HCT116 (cell line): ENCODE measurements at regions of chr10 and their contacts with region 1.

Region 1: GRCh38 chr10:100878291-100878910 is 34.4 kb upstream of the SLF2 start:
- DNase-seq: peak; percentile 82
- ATAC-seq: peak; percentile 96
- H3K4me3 ChIP-seq: no peak overlapping the region
- H3K27ac ChIP-seq: no peak overlapping the region
- H3K4me1 ChIP-seq: peaks cover 8 to 27% of the 10 kb centered on the region in 2 experiments
- H3K27me3 ChIP-seq: no peaks in the 10 kb centered on the region
- CTCF ChIP-seq: peak; percentile 90 to 98 (median 92)
- POLR2A ChIP-seq: no peak
- RAD21 ChIP-seq: peak; percentile 99

Region 2: DNA sequence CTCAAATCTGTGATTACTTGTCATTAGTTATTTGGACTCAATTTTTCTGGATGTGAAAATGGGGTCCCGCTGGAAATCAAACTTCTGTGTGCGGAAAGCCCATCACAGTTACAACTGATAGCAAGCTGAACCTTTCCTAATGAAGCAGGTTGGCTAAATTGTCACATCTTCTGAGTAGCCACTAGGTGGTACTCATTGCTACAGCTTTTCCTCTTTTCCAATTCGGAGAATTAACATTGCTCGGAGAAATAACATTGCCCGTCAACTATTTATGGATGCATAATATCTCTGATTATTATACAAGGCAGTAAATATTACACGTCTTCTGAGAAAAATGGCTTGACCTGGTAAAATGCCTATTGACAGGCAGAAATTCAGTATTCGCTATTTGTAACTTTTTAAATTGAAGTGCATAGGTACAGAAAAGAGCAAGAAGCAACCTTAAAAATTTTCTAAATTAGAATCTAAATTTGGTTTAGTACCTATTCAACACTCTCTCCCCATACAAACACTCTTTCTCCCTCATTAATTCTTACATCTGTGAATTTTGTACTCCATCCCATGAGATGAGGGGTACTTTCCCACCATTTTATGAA is 574.6 kb before region 1 on chr10:
- CTCF ChIA-PET with region 1: interaction called, 9 read pairs
- POLR2A ChIA-PET with region 1: no interaction called
- RAD21 ChIA-PET with region 1: no interaction called
- intact Hi-C with region 1: loop called (anchors 1 kb)
- DNase-seq: peak; percentile 32
- ATAC-seq: peak; percentile 87
- H3K4me3 ChIP-seq: no peak overlapping the region
- H3K27ac ChIP-seq: no peak overlapping the region
- H3K4me1 ChIP-seq: peaks cover 4 to 7% of the 10 kb centered on the region in 2 experiments; a peak in 2 of 4 replicates
- H3K27me3 ChIP-seq: no peaks in the 10 kb centered on the region; the same call in 1 of the 2 replicates
- CTCF ChIP-seq: peak; percentile 84 to 91 (median 87); a peak in 5 of 6 replicates
- POLR2A ChIP-seq: no peak
- RAD21 ChIP-seq: peak; percentile 89

Region 3: DNA sequence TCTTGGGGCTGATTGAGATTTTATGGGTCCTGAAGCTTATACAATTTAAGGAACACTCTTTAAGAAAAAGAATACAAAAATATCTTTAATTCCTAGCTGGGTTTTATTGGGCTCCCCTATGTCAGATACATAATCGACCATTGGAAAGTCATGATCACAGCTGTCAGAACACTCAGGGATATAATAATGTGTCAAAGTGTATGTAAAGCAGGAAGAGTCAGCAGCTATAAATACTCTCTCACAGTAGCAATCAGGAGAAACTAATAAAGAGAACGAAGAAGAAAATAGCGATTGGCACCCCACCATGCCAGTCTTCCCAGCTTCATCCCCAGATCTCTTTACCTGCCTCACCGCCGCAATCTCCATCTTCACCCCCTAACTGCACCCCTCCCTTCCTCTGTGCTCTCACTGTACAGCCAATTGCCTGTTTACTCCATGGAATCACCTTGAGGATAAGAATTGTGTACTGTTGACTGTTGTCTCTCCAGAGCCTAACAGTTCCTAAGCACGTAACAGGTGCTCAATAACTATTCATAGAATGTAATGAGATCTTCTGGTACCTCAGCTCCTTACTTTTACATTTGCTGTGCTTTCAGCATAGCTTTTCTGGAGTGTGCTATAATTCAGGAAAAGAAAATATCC is 439.6 kb before region 1 on chr10:
- CTCF ChIA-PET with region 1: interaction called, 27 read pairs
- POLR2A ChIA-PET with region 1: no interaction called
- RAD21 ChIA-PET with region 1: interaction called in 1 of 2 experiments, 4 read pairs
- intact Hi-C with region 1: loop called (anchors 1 kb)
- DNase-seq: no peak
- ATAC-seq: no peak
- H3K4me3 ChIP-seq: no peak overlapping the region
- H3K27ac ChIP-seq: no peak overlapping the region
- H3K4me1 ChIP-seq: peaks cover 0 to 4% of the 10 kb centered on the region in 2 experiments; a peak in 2 of 4 replicates
- H3K27me3 ChIP-seq: no peaks in the 10 kb centered on the region
- CTCF ChIP-seq: no peak
- POLR2A ChIP-seq: no peak
- RAD21 ChIP-seq: no peak

Region 4: GRCh38 chr10:100535715-100536353 is 342.6 kb before region 1 on chr10 and contains the start of gene HIF1AN:
- CTCF ChIA-PET with region 1: interaction called, 23 read pairs
- POLR2A ChIA-PET with region 1: interaction called, 8 read pairs
- RAD21 ChIA-PET with region 1: interaction called in 1 of 2 experiments, 4 read pairs
- intact Hi-C with region 1: no loop called
- DNase-seq: peak; percentile 97
- ATAC-seq: peak; percentile 99
- H3K4me3 ChIP-seq: peak within 1 kb of the TSS; percentile 79 to 83
- H3K27ac ChIP-seq: peak within 1 kb of the TSS; percentile 14; the same call in 1 of the 2 replicates
- H3K4me1 ChIP-seq: peaks cover 10 to 17% of the 10 kb centered on the region in 2 experiments
- H3K27me3 ChIP-seq: no peaks in the 10 kb centered on the region
- CTCF ChIP-seq: peak; percentile 80 to 99 (median 97)
- POLR2A ChIP-seq: peak; percentile 92
- RAD21 ChIP-seq: no peak
- total RNA-seq, gene HIF1AN: 67.2 TPM

Region 5: GRCh38 chr10:100637785-100638184 is 240.6 kb before region 1 on chr10:
- CTCF ChIA-PET with region 1: interaction called, 15 read pairs
- POLR2A ChIA-PET with region 1: no interaction called
- RAD21 ChIA-PET with region 1: no interaction called
- intact Hi-C with region 1: no loop called
- DNase-seq: peak; percentile 56
- ATAC-seq: peak; percentile 99
- H3K4me3 ChIP-seq: no peak overlapping the region
- H3K27ac ChIP-seq: no peak overlapping the region
- H3K4me1 ChIP-seq: peaks cover 0 to 10% of the 10 kb centered on the region in 2 experiments; a peak in 2 of 4 replicates
- H3K27me3 ChIP-seq: no peaks in the 10 kb centered on the region
- CTCF ChIP-seq: peak; percentile 89 to 98 (median 98)
- POLR2A ChIP-seq: no peak
- RAD21 ChIP-seq: peak; percentile 74

Region 6: DNA sequence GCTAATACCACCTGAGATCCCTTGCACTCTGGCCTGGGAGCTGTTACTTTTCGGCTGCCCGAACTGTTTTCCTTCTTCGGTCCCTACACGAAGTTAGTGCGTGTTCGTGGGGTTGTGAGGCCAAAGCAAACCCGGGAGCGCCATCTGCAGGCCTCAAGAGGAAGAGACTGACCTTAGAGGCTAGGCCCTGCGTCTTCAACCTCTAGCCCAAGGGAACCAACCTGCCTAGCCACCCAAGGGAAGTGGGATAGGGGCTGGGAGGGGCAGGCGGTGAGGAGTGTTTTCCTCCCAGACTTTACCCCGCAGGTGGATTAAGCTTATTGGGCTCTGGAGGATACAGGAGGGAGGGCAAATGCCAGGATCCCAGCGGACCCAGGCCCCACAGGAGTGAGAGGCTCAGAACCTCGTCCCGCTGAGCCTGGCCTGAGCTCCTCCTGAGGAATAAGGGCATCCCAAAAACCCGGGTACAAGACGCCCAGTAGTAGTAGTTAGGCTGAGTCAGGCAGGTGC is 134.7 kb before region 1 on chr10:
- CTCF ChIA-PET with region 1: interaction called, 38 read pairs
- POLR2A ChIA-PET with region 1: interaction called, 3 read pairs
- RAD21 ChIA-PET with region 1: interaction called in 1 of 2 experiments, 6 read pairs
- intact Hi-C with region 1: loop called (anchors 2 kb)
- DNase-seq: peak; percentile 80
- ATAC-seq: peak; percentile 69
- H3K4me3 ChIP-seq: no peak overlapping the region
- H3K27ac ChIP-seq: no peak overlapping the region
- H3K4me1 ChIP-seq: peaks cover 8 to 31% of the 10 kb centered on the region in 2 experiments; a peak in 3 of 4 replicates
- H3K27me3 ChIP-seq: no peaks in the 10 kb centered on the region
- CTCF ChIP-seq: peak; percentile 98 to 99 (median 98)
- POLR2A ChIP-seq: no peak
- RAD21 ChIP-seq: peak; percentile 98

Region 7: DNA sequence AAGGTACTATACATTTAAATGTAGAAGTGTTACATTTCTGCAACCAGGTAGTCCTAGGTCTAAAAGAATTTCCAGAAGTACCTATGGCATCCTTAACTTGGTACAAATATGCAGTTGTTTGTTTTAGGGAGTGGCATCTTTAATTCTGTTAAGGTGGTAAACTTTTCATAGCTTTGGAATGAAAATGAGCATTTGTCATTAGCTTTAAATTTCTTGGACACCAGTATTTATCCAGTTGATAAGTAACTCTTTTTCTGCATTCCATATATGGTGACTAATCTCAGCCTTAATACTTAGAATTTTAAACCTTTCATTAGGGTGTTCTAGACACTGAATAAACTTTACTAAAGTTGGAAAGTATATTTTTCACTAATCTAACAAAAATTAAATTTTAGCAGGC is 45.2 kb after region 1 on chr10:
- CTCF ChIA-PET with region 1: no interaction called
- POLR2A ChIA-PET with region 1: no interaction called
- RAD21 ChIA-PET with region 1: no interaction called
- intact Hi-C with region 1: no loop called
- DNase-seq: no peak
- ATAC-seq: no peak
- H3K4me3 ChIP-seq: no peak overlapping the region
- H3K27ac ChIP-seq: no peak overlapping the region
- H3K4me1 ChIP-seq: no peaks in the 10 kb centered on the region
- H3K27me3 ChIP-seq: no peaks in the 10 kb centered on the region
- CTCF ChIP-seq: no peak
- POLR2A ChIP-seq: no peak
- RAD21 ChIP-seq: no peak